Dorsolateral prefrontal cortex (tissue), 120 donors: ENCODE measurements at regions of chr21 and their contacts with region 1.

Region 1: GRCh38 chr21:37072988-37073416 is at the starts of genes PIGP and TTC3:
- DNase-seq: peak; percentile 86 to 97 (median 94)
- H3K4me3 ChIP-seq: peak within 1 kb of the TSS; percentile 70 to 99 (median 91)
- H3K27ac ChIP-seq: peak within 1 kb of the TSS; percentile 96 to 100 (median 100)
- H3K27me3 ChIP-seq: no peaks in the 10 kb centered on the region
- CTCF ChIP-seq: peak in 2 of 56 donors; percentile 4 to 7
- total RNA-seq, gene PIGP: 10.2 to 39.8 (median 22.9) TPM
- total RNA-seq, gene TTC3: 216 to 414 (median 302) TPM

Region 2: GRCh38 chr21:36989699-36990507 is 83.1 kb before region 1 on chr21:
- intact Hi-C with region 1: loop called (anchors 1 to 2 kb)
- DNase-seq: peak; percentile 73 to 94 (median 85)
- H3K4me3 ChIP-seq: peak overlapping the region; percentile 53 to 88 (median 71)
- H3K27ac ChIP-seq: peak overlapping the region; percentile 70 to 99 (median 95)
- H3K27me3 ChIP-seq: peaks cover 0 to 8% (median 0%) of the 10 kb centered on the region in 45 donors
- CTCF ChIP-seq: peak in 55 of 56 donors; percentile 40 to 98 (median 88)

Region 3: GRCh38 chr21:37009740-37010341 is 63.2 kb before region 1 on chr21:
- intact Hi-C with region 1: loop called in 1 of 2 experiments (anchors 5 kb)
- DNase-seq: peak; percentile 52 to 85 (median 68)
- H3K4me3 ChIP-seq: peak overlapping the region in 47 of 59 donors; percentile 1 to 60 (median 38)
- H3K27ac ChIP-seq: no peak overlapping the region
- H3K27me3 ChIP-seq: peaks cover 0 to 62% (median 38%) of the 10 kb centered on the region in 45 donors
- CTCF ChIP-seq: peak; percentile 47 to 89 (median 76)

Region 4: GRCh38 chr21:37060296-37060695 is 12.7 kb before region 1 on chr21:
- intact Hi-C with region 1: no loop called
- DNase-seq: peak in 6 of 10 donors; percentile 54 to 80 (median 74)
- H3K4me3 ChIP-seq: no peak overlapping the region
- H3K27ac ChIP-seq: peak overlapping the region in 54 of 59 donors; percentile 1 to 89 (median 72)
- H3K27me3 ChIP-seq: no peaks in the 10 kb centered on the region
- CTCF ChIP-seq: peak in 2 of 56 donors; percentile 7 to 15

Region 5: DNA sequence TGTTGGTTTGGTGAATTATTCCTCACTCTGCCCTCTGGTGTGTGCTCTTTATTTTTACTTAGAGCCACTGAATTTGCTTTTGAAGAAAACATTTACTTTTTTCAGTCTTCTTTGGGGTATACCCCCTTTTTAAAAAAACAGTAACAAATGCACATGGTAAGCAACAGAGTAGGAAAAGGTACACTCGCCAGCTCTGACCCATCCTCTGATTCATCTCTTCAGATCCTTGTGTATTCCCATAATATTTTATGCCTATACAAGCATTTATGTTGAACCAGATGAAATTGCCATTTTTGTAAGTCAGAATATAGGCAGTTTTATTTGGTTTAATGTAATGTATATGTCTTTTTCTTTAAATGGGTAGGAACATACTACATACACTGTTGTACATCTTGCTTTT is 28.4 kb after region 1 on chr21:
- intact Hi-C with region 1: no loop called
- DNase-seq: no peak
- H3K4me3 ChIP-seq: no peak overlapping the region
- H3K27ac ChIP-seq: no peak overlapping the region
- H3K27me3 ChIP-seq: no peaks in the 10 kb centered on the region
- CTCF ChIP-seq: no peak

Region 6: DNA sequence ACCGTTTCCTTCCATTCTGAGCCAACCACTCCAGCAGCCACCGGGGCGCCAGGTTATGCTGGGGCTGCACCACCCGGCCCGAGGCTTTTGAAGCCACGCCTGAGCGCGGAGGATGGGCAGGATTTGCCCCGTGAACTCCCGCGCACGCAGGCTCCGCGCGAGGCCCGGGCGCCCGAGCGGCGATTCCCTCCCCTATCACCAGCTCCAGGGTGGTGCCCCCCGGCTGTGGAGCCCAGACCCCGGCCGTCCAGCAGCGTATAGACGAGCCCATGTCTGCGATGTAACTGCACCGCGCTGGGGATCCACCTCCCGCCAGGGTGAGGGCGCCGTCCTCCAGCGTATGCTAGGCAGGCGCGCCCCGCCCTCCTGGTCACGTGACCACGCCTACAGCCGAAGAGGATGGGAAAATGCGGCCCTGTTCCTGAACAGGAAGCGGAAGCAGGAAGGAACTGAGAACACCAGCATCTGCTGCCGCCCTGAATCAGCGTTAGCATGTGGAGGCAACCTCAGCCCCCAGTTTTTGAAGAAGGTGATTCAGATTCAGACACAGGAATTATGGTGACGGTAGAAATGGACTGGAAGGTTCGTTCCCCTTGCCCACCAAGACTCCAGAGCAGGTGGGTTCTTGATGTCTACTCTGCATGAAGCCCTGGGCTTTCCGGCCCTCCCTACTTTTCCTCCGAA is 148.1 kb after region 1 on chr21:
- intact Hi-C with region 1: loop called in 1 of 2 experiments (anchors 5 kb)
- DNase-seq: peak; percentile 91 to 97 (median 96)
- H3K4me3 ChIP-seq: peak overlapping the region; percentile 39 to 96 (median 79)
- H3K27ac ChIP-seq: peak overlapping the region; percentile 2 to 93 (median 82)
- H3K27me3 ChIP-seq: no peaks in the 10 kb centered on the region
- CTCF ChIP-seq: peak; percentile 52 to 92 (median 74)

Region 7: DNA sequence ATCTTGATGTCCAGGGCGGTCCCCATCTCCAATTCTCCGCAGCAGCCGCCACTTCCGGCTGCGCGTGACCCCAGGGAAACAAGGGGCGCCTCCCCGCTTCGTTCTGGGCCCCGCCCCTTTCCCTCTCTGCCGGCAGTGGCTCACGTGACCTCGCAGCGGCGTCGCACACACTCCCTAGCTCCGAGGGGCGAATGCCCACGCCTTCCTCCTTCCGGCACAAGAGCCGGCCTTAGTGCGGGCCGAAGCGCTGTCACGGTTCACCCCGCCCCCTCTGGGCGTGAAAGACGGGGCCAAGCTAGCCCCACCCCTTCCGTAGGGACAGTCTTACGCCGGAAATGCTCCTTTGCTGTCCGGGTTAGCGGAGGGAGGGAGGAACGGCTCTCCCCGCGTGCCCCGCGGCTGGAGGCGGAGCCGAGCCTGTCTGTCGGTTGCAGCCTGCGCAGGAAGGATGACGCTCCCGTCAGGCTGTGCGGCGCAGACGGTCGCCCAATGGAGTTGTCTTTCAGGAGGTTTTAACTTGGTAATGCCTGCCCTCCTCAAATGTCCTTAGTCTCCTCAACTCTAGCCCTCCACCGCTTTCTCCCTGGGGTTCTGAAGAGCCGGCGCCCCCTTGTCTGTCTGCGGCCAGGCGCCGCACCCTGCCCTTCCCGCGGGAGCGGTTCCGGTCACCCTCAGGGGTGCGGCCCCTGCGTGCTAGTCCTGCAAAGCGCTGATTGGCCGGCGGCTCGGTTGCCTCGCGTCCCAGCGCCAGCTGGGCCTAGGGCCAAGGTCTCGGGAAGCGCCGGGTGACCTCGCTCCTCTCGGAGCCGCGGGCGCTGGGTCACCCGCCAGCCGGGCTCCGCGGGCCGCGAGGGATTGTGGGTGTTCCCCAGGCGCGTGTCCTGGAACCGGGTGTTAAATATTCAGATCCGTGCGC is 194.5 kb after region 1 on chr21 and contains the start of gene VPS26C:
- intact Hi-C with region 1: loop called (anchors 2 to 5 kb)
- DNase-seq: peak; percentile 94 to 99 (median 98)
- H3K4me3 ChIP-seq: peak within 1 kb of the TSS; percentile 62 to 99 (median 92)
- H3K27ac ChIP-seq: peak within 1 kb of the TSS; percentile 89 to 100 (median 98)
- H3K27me3 ChIP-seq: no peaks in the 10 kb centered on the region
- CTCF ChIP-seq: peak in 20 of 56 donors; percentile 5 to 38 (median 18)
- total RNA-seq, gene VPS26C: 32.9 to 58.9 (median 44.4) TPM

Region 8: DNA sequence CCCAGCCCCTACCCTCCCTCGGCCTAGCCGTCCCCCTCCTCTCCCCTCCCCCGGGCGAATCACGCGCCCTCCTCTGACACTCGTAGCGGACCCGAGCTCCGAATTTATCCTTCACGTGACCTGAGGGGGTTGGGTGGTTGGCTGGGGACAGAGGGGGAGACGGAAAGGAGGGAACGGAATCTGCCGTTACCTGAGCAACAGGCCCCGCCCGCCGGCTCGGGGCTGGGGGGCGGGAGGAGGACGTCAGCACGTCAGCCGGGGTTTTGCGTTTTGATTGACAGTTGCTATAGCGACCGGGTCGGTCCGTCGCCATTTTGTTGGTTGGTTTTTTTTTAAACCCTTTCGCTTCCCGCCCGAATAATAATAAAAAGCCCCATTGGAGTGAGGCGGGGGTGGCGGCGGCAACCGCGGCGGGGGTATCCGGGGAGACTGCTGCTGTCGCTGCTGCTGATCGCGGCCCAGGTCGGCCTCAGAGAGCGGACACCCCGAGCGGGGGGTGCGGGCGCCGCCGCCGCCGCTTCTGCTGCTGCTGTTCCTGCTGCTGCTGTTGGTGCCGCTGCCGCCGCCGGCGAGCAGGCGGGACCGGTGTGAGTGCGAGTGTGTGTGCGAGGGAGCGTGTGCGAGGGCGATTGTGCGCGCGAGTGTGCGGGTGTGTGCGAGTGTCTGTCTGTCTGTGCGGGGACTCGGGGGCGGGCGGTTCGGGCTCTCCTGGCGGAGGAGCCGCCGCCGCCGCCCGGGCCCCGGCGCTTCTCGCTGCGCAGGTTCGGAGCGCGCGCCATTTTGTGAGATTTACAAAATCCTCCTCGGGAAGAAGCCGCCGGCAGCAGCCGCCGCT is 293.7 kb after region 1 on chr21 and contains the start of gene DYRK1A:
- intact Hi-C with region 1: loop called (anchors 1 to 5 kb)
- DNase-seq: peak; percentile 95 to 99 (median 98)
- H3K4me3 ChIP-seq: peak within 1 kb of the TSS; percentile 77 to 99 (median 92)
- H3K27ac ChIP-seq: peak within 1 kb of the TSS; percentile 96 to 100 (median 100)
- H3K27me3 ChIP-seq: no peaks in the 10 kb centered on the region
- CTCF ChIP-seq: peak in 5 of 56 donors; percentile 11 to 26 (median 17)
- total RNA-seq, gene DYRK1A: 72.3 to 147 (median 97.5) TPM